IMR-90 (cell line): ENCODE measurements at regions of chr1 and their contacts with region 1.

Region 1: DNA sequence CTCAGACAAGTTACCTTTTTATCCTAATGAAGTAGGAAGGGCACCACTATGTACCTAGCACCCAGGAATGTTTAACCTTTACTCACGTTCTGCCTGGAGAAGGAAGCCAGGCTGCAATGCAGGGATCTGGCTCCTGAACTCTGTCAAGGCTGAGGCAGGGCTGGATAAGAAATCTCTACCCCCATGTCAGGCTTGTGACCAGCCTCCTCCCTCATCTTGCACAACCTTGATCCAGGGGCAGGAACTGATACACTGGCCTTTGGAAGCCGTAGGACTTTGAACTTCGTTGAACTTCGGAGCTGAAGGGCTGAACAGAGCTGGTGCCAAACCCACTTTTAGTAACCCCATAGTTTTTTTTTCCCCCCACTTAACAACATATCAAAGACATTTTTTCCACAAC is 8.0 kb upstream of the AKR1A1 start:
- DNase-seq: no peak
- ATAC-seq: no peak
- H3K4me3 ChIP-seq: no peak overlapping the region
- H3K27ac ChIP-seq: no peak overlapping the region
- H3K4me1 ChIP-seq: no peaks in the 10 kb centered on the region
- H3K27me3 ChIP-seq: peaks cover 2% of the 10 kb centered on the region; the same call in 1 of the 2 replicates
- CTCF ChIP-seq: no peak
- POLR2A ChIP-seq: no peak
- RAD21 ChIP-seq: no peak

Region 2: DNA sequence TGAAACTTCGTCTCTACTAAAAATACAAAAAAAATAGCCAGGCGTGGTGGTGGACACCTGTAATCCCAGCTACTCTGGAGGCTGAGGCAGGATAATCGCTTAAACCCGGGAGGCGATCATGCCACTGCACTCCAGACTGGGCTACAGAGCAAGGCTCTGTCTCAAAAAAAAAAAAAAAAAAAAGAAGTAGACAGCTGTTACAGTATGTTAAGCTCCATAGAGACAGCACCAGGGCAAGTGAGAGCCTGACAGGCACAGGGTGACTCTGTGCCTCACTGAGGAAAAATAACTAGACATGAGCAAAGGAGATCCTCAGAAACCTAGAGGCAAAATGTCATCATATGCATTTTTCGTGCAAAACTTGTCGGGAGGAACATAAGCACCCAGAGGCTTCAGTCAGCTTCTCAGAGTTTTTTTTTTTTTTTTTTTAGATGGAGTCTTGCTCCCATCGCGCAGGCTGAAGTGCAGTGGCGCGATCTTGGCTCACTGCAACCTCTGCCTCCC is 11.9 kb before region 1 on chr1:
- CTCF ChIA-PET with region 1: interaction called, 5 read pairs
- POLR2A ChIA-PET with region 1: interaction called, 16 read pairs
- dilution Hi-C with region 1: no loop called
- in situ Hi-C with region 1: no loop called
- intact Hi-C with region 1: no loop called
- DNase-seq: no peak
- ATAC-seq: no peak
- H3K4me3 ChIP-seq: no peak overlapping the region
- H3K27ac ChIP-seq: no peak overlapping the region
- H3K4me1 ChIP-seq: no peaks in the 10 kb centered on the region
- H3K27me3 ChIP-seq: no peaks in the 10 kb centered on the region
- CTCF ChIP-seq: no peak
- POLR2A ChIP-seq: no peak
- RAD21 ChIP-seq: no peak

Region 3: GRCh38 chr1:45694823-45695222 is 152.2 kb after region 1 on chr1:
- CTCF ChIA-PET with region 1: no interaction called
- POLR2A ChIA-PET with region 1: no interaction called
- dilution Hi-C with region 1: no loop called
- in situ Hi-C with region 1: no loop called
- intact Hi-C with region 1: no loop called
- DNase-seq: no peak
- ATAC-seq: no peak
- H3K4me3 ChIP-seq: no peak overlapping the region
- H3K27ac ChIP-seq: no peak overlapping the region
- H3K4me1 ChIP-seq: no peaks in the 10 kb centered on the region
- H3K27me3 ChIP-seq: no peaks in the 10 kb centered on the region
- CTCF ChIP-seq: no peak
- POLR2A ChIP-seq: no peak
- RAD21 ChIP-seq: no peak

Region 4: DNA sequence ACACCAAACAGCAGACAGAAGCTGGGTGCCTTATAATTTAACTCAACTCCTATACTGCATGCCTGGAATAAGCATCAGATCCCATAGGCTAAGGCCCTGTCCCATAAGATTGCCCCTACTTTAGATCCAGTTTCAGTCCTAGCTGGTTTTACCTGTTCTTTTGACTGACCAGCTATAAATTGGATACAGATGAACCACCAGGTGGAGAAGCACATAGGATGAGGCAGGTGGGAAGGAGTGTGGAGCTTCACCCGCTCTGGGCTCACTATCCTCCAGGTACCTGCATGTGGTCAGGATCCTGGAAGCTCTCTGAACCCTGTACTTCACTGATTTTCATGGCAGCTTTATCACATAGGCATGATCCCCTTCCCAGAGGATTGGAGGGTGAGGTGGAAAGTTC is 312.1 kb after region 1 on chr1:
- CTCF ChIA-PET with region 1: no interaction called
- POLR2A ChIA-PET with region 1: no interaction called
- dilution Hi-C with region 1: no loop called
- in situ Hi-C with region 1: no loop called
- intact Hi-C with region 1: no loop called
- DNase-seq: no peak
- ATAC-seq: no peak
- H3K4me3 ChIP-seq: no peak overlapping the region
- H3K27ac ChIP-seq: no peak overlapping the region
- H3K4me1 ChIP-seq: no peaks in the 10 kb centered on the region
- H3K27me3 ChIP-seq: no peaks in the 10 kb centered on the region
- CTCF ChIP-seq: no peak
- POLR2A ChIP-seq: no peak
- RAD21 ChIP-seq: no peak

Region 5: DNA sequence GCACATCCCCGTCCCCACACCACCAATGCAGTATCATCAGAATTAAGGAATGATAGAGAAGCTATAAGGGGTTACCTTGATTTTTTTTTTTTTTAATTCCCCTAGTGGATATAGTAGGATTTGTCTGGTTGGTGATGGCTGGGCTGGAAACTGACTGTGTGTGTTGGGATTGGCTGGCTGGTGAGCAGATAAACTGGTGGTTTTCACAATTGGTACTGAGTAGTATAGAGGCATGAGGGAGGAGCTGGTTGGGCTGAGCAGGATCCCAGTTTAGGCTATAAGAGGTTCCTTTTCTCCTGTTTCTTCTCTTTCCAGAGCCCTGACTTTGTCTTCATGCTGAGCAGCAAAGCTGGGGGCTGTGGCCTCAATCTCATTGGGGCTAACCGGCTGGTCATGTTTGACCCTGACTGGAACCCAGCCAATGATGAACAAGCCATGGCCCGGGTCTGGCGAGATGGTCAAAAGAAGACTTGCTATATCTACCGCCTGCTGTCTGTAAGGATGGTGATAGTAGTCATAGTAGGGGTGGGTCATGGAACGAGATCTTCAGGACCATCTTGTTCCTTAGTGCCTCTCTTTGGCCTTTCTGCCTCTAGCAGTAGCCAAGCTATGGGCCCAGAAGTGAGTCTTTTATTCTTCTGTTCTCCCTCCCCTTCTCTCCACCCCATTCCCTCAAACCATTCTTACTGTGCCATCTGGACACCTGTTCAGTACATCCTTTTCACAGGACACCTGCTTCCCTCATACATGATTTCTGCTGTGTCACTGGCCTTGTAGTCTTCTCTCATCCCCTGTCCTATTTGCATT is 731.8 kb after region 1 on chr1:
- CTCF ChIA-PET with region 1: interaction called, 11 read pairs
- POLR2A ChIA-PET with region 1: no interaction called
- dilution Hi-C with region 1: no loop called
- in situ Hi-C with region 1: no loop called
- intact Hi-C with region 1: no loop called
- DNase-seq: no peak
- ATAC-seq: peak; percentile 51
- H3K4me3 ChIP-seq: no peak overlapping the region
- H3K27ac ChIP-seq: no peak overlapping the region
- H3K4me1 ChIP-seq: no peaks in the 10 kb centered on the region
- H3K27me3 ChIP-seq: no peaks in the 10 kb centered on the region
- CTCF ChIP-seq: no peak
- POLR2A ChIP-seq: no peak
- RAD21 ChIP-seq: no peak